ENCODE measurements at regions of chr15 and their contacts with region 1.

Region 1: GRCh38 chr15:68277603-68278344 is at the start of gene FEM1B:
- DNase-seq: peak; percentile 80 to 96 (median 85)
- ATAC-seq: peak; percentile 76
- H3K4me3 ChIP-seq: peak within 1 kb of the TSS; percentile 67
- H3K4me3 Mint-ChIP-seq: peak within 1 kb of the TSS; percentile 98
- H3K27ac ChIP-seq: peak within 1 kb of the TSS; percentile 91 to 94
- H3K27ac Mint-ChIP-seq: peak within 1 kb of the TSS; percentile 99
- H3K4me1 ChIP-seq: peaks cover 36% of the 10 kb centered on the region
- H3K4me1 Mint-ChIP-seq: peaks cover 58% of the 10 kb centered on the region
- H3K27me3 ChIP-seq: no peaks in the 10 kb centered on the region
- H3K27me3 Mint-ChIP-seq: no peaks in the 10 kb centered on the region
- CTCF ChIP-seq: no peak
- total RNA-seq, gene FEM1B: 83.2 to 94.9 TPM

Region 2: DNA sequence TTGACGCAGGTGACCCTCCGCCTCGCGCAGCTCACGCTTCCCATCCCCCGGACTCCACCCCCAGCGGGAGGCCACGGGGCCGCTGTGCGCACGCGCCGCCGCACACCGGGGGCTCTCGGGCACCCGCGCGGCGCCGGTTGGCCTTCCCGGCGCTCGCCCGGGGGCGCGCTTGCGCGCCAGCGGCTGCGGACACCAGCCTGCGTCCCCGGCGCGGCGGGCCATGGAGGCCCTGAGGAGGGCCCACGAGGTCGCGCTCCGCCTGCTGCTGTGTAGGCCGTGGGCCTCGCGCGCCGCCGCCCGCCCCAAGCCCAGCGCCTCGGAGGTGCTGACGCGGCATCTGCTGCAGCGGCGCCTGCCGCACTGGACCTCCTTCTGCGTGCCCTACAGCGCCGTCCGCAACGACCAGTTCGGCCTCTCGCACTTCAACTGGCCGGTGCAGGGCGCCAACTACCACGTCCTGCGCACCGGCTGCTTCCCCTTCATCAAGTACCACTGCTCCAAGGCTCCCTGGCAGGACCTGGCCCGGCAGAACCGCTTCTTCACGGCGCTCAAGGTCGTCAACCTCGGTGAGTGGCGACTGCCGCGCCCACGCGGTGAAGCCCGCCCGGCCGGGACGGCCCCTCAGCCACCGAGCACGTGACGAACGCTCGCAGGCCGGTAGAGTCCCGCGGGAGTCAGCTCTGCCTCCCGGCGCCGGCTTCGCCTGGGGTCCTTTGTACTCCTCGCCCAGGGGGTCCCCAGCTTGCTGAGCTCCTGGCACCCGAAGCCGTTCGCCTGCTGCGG is 756.6 kb before region 1 on chr15 and contains the start of gene C15orf61:
- CTCF ChIA-PET with region 1: no interaction called
- POLR2A ChIA-PET with region 1: no interaction called
- intact Hi-C with region 1: loop called in 1 of 2 experiments (anchors 5 kb)
- DNase-seq: peak; percentile 70 to 95 (median 82)
- ATAC-seq: peak; percentile 80
- H3K4me3 ChIP-seq: peak within 1 kb of the TSS; percentile 78
- H3K4me3 Mint-ChIP-seq: peak within 1 kb of the TSS; percentile 95
- H3K27ac ChIP-seq: peak within 1 kb of the TSS; percentile 80 to 84
- H3K27ac Mint-ChIP-seq: peak within 1 kb of the TSS; percentile 91
- H3K4me1 ChIP-seq: peaks cover 13% of the 10 kb centered on the region
- H3K4me1 Mint-ChIP-seq: peaks cover 30% of the 10 kb centered on the region
- H3K27me3 ChIP-seq: no peaks in the 10 kb centered on the region
- H3K27me3 Mint-ChIP-seq: no peaks in the 10 kb centered on the region
- CTCF ChIP-seq: no peak
- total RNA-seq, gene C15orf61: 11.3 to 12.0 TPM

Region 3: DNA sequence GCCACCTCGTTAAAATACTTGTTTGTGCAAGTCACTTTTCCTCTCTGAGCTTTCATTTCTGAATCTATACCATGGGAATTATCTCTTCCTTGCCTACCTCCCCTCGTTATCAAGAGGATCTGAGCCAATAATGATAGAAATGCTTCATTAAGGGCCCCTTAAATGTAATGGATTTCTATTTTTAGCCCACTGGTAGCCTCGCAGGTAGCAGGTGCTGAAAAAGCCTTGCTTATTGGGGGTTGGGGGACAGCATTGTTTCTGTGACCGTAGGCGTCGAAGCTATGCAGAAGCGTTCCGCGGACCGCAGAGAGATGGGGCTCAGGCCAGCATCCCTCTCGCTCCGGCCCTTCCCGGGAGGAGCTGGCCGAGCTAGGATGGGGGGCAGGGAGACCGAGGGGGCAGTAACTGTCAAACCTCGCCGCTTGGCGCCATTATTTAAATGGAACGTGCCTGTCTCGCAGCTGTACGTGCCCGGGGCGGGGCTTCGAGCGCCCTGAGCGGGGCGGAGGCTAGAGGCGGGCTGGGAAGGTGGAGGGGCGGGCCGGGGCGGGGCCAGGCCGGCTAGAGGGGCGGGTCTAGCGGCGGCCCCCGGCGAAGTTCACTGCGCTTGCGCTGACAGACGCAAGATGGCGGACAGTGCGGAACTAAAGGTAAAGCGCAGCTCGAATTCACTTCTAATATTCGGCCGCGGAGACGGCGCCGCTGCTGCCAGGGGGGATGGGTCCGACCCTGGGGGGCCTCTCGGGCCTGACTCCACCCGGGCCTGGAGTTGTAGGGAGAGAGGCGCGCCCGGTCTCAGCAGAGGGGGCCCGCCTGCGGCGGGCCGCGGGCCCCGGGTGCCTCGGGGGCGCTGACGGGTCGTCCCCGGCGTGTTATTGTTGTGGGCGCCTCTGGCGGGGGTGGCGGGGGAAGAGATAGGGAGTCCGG is 223.8 kb before region 1 on chr15 and contains the start of gene PIAS1:
- CTCF ChIA-PET with region 1: no interaction called
- POLR2A ChIA-PET with region 1: interaction called, 32 read pairs
- intact Hi-C with region 1: loop called (anchors 5 kb)
- DNase-seq: peak; percentile 87 to 97 (median 93)
- ATAC-seq: peak; percentile 90
- H3K4me3 ChIP-seq: peak within 1 kb of the TSS; percentile 94
- H3K4me3 Mint-ChIP-seq: peak within 1 kb of the TSS; percentile 98
- H3K27ac ChIP-seq: peak within 1 kb of the TSS; percentile 56 to 92
- H3K27ac Mint-ChIP-seq: peak within 1 kb of the TSS; percentile 86
- H3K4me1 ChIP-seq: peaks cover 16% of the 10 kb centered on the region
- H3K4me1 Mint-ChIP-seq: peaks cover 39% of the 10 kb centered on the region
- H3K27me3 ChIP-seq: no peaks in the 10 kb centered on the region
- H3K27me3 Mint-ChIP-seq: no peaks in the 10 kb centered on the region
- CTCF ChIP-seq: no peak
- total RNA-seq, gene PIAS1: 73.1 to 74.8 TPM

Region 4: DNA sequence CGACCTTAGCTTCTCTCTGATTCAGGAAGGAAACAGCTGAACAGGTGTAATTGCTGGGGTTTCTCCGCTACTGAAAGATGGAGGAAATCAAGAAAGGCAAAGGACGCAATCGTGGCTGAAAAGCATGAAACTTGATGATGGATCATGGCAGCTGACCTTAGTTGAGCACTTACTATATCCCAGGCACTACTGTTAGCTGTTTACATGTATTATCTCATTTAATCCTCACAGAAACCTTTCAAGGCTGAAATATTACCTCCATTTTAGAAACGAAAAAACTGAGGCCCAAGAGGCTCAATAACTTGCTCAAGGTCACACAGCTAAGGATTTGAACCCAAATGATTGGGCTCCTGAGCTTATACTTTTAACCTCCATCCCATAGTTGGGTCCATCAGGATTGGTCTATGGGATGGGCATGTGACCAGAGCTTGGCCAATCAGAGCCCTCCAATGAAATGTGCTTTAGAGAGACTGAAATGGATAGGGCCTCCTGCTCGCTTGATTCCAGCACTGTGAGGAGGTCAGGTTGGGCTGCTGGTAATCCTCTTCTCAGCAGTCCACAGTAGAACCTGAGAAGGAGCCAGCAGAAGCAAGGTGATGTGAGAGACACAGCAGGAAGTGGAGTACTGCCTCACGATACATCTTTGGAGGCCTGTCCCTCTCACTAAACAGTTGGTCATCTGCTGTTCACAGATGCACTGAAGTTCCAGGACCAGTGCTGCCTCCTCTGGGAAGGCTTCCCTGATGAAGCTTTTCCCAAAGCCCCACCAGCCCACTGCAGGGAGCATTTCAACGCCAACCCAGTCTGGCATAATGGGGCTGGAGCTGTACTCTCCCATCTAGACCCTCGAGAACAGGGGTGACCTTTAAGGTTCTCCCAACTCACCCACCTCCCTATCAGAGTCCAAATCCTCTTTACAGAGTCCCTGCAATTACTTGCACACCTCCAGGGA is 58.7 kb before region 1 on chr15:
- CTCF ChIA-PET with region 1: no interaction called
- POLR2A ChIA-PET with region 1: no interaction called
- intact Hi-C with region 1: no loop called
- DNase-seq: no peak
- ATAC-seq: no peak
- H3K4me3 ChIP-seq: no peak overlapping the region
- H3K4me3 Mint-ChIP-seq: no peak overlapping the region
- H3K27ac ChIP-seq: no peak overlapping the region
- H3K27ac Mint-ChIP-seq: no peak overlapping the region
- H3K4me1 ChIP-seq: no peaks in the 10 kb centered on the region
- H3K4me1 Mint-ChIP-seq: no peaks in the 10 kb centered on the region
- H3K27me3 ChIP-seq: no peaks in the 10 kb centered on the region
- H3K27me3 Mint-ChIP-seq: no peaks in the 10 kb centered on the region
- CTCF ChIP-seq: no peak

Region 5: GRCh38 chr15:68252925-68253534 is 24.7 kb before region 1 on chr15:
- CTCF ChIA-PET with region 1: interaction called, 10 read pairs
- POLR2A ChIA-PET with region 1: interaction called, 57 read pairs
- intact Hi-C with region 1: loop called (anchors 2 kb)
- DNase-seq: peak in 6 of 14 experiments; percentile 16 to 76 (median 60)
- ATAC-seq: peak; percentile 75
- H3K4me3 ChIP-seq: no peak overlapping the region
- H3K4me3 Mint-ChIP-seq: peak overlapping the region; percentile 44
- H3K27ac ChIP-seq: no peak overlapping the region
- H3K27ac Mint-ChIP-seq: no peak overlapping the region
- H3K4me1 ChIP-seq: peaks cover 9% of the 10 kb centered on the region
- H3K4me1 Mint-ChIP-seq: peaks cover 7% of the 10 kb centered on the region
- H3K27me3 ChIP-seq: no peaks in the 10 kb centered on the region
- H3K27me3 Mint-ChIP-seq: no peaks in the 10 kb centered on the region
- CTCF ChIP-seq: peak; percentile 89

Region 6: GRCh38 chr15:68292157-68292781 is 14.5 kb after region 1 on chr15:
- CTCF ChIA-PET with region 1: interaction called, 7 read pairs
- POLR2A ChIA-PET with region 1: interaction called, 17 read pairs
- intact Hi-C with region 1: loop called in 1 of 2 experiments (anchors 2 kb)
- DNase-seq: no peak
- ATAC-seq: no peak
- H3K4me3 ChIP-seq: no peak overlapping the region
- H3K4me3 Mint-ChIP-seq: no peak overlapping the region
- H3K27ac ChIP-seq: no peak overlapping the region
- H3K27ac Mint-ChIP-seq: peak overlapping the region; percentile 6
- H3K4me1 ChIP-seq: peaks cover 5% of the 10 kb centered on the region
- H3K4me1 Mint-ChIP-seq: peaks cover 68% of the 10 kb centered on the region
- H3K27me3 ChIP-seq: no peaks in the 10 kb centered on the region
- H3K27me3 Mint-ChIP-seq: no peaks in the 10 kb centered on the region
- CTCF ChIP-seq: no peak

Region 7: GRCh38 chr15:68304589-68305337 is 27.0 kb after region 1 on chr15:
- CTCF ChIA-PET with region 1: interaction called, 21 read pairs
- POLR2A ChIA-PET with region 1: interaction called, 37 read pairs
- intact Hi-C with region 1: loop called (anchors 2 kb)
- DNase-seq: no peak
- ATAC-seq: no peak
- H3K4me3 ChIP-seq: no peak overlapping the region
- H3K4me3 Mint-ChIP-seq: no peak overlapping the region
- H3K27ac ChIP-seq: no peak overlapping the region
- H3K27ac Mint-ChIP-seq: no peak overlapping the region
- H3K4me1 ChIP-seq: peaks cover 8% of the 10 kb centered on the region
- H3K4me1 Mint-ChIP-seq: peaks cover 35% of the 10 kb centered on the region
- H3K27me3 ChIP-seq: peaks cover 0 to 4% of the 10 kb centered on the region in 2 experiments
- H3K27me3 Mint-ChIP-seq: no peaks in the 10 kb centered on the region
- CTCF ChIP-seq: no peak

Measured in CD4-positive, alpha-beta T cell (primary cell).